CD4-positive, alpha-beta T cell (primary cell): ENCODE measurements at regions of chr14 and their contacts with region 1.

Region 1: GRCh38 chr14:22519877-22520685 is 68.9 kb downstream of the DAD1 start:
- DNase-seq: peak in 2 of 14 experiments; percentile 30 to 61
- ATAC-seq: peak; percentile 19
- H3K4me3 ChIP-seq: peak overlapping the region; percentile 61
- H3K4me3 Mint-ChIP-seq: peak overlapping the region; percentile 86
- H3K27ac ChIP-seq: peak overlapping the region; percentile 85 to 99
- H3K27ac Mint-ChIP-seq: peak overlapping the region; percentile 93
- H3K4me1 ChIP-seq: peaks cover 89% of the 10 kb centered on the region
- H3K4me1 Mint-ChIP-seq: peaks cover 100% of the 10 kb centered on the region
- H3K27me3 ChIP-seq: no peaks in the 10 kb centered on the region
- H3K27me3 Mint-ChIP-seq: no peaks in the 10 kb centered on the region
- CTCF ChIP-seq: no peak

Region 2: GRCh38 chr14:22221508-22221907 is 298.6 kb before region 1 on chr14:
- CTCF ChIA-PET with region 1: interaction called, 3 read pairs
- POLR2A ChIA-PET with region 1: no interaction called
- intact Hi-C with region 1: loop called in 1 of 2 experiments (anchors 10 kb)
- DNase-seq: peak in 3 of 14 experiments; percentile 39 to 51 (median 39)
- ATAC-seq: peak; percentile 41
- H3K4me3 ChIP-seq: no peak overlapping the region
- H3K4me3 Mint-ChIP-seq: peak overlapping the region; percentile 73
- H3K27ac ChIP-seq: no peak overlapping the region
- H3K27ac Mint-ChIP-seq: peak overlapping the region; percentile 67
- H3K4me1 ChIP-seq: no peaks in the 10 kb centered on the region
- H3K4me1 Mint-ChIP-seq: peaks cover 17% of the 10 kb centered on the region
- H3K27me3 ChIP-seq: no peaks in the 10 kb centered on the region
- H3K27me3 Mint-ChIP-seq: no peaks in the 10 kb centered on the region
- CTCF ChIP-seq: peak; percentile 12

Region 3: GRCh38 chr14:22497144-22497423 is 23.0 kb before region 1 on chr14:
- CTCF ChIA-PET with region 1: no interaction called
- POLR2A ChIA-PET with region 1: interaction called, 412 read pairs
- intact Hi-C with region 1: loop called in 1 of 2 experiments (anchors 2 kb)
- DNase-seq: peak in 1 of 14 experiments; percentile 26
- ATAC-seq: peak; percentile 19
- H3K4me3 ChIP-seq: peak overlapping the region; percentile 61
- H3K4me3 Mint-ChIP-seq: peak overlapping the region; percentile 95
- H3K27ac ChIP-seq: peak overlapping the region; percentile 40 to 75
- H3K27ac Mint-ChIP-seq: peak overlapping the region; percentile 93
- H3K4me1 ChIP-seq: peaks cover 23% of the 10 kb centered on the region
- H3K4me1 Mint-ChIP-seq: peaks cover 82% of the 10 kb centered on the region
- H3K27me3 ChIP-seq: no peaks in the 10 kb centered on the region
- H3K27me3 Mint-ChIP-seq: no peaks in the 10 kb centered on the region
- CTCF ChIP-seq: no peak

Region 4: DNA sequence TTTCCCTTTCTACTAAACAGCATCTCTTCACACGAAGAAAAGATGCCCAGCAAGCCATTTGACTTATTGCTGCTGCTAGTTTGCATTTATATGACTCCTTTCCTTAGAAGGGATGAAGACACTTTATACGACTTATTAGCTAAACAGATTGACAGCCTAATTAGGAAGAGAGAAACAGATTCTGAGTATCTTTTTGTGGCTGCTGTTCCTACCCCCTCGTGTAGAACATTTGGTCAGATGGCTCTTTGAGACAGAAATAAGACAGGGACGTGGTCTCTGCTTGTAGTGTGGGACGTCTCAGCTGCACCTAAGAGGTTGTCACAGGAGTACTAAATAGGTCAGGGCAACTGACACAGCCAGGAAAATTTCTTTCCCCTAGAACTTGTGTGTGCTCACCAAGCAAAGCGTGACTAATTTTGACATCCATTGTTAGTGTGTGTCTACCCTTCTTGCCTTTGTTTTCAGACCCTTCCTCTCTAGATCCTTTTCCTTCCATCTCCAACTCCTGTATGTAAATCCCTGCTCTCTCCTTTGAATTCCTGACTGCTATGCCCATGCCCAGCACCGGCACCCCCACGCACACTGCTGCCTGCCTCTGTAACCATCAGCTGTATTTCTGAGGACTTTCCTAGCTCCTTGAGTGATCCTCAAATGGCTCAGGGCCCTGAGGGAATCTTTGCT is 14.2 kb before region 1 on chr14:
- CTCF ChIA-PET with region 1: interaction called, 4 read pairs
- POLR2A ChIA-PET with region 1: interaction called, 412 read pairs
- intact Hi-C with region 1: loop called in 1 of 2 experiments (anchors 2 kb)
- DNase-seq: peak in 5 of 14 experiments; percentile 26 to 65 (median 56)
- ATAC-seq: peak; percentile 36
- H3K4me3 ChIP-seq: peak overlapping the region; percentile 61
- H3K4me3 Mint-ChIP-seq: peak overlapping the region; percentile 77
- H3K27ac ChIP-seq: peak overlapping the region; percentile 77 to 99
- H3K27ac Mint-ChIP-seq: peak overlapping the region; percentile 93
- H3K4me1 ChIP-seq: peaks cover 45% of the 10 kb centered on the region
- H3K4me1 Mint-ChIP-seq: peaks cover 79% of the 10 kb centered on the region
- H3K27me3 ChIP-seq: no peaks in the 10 kb centered on the region
- H3K27me3 Mint-ChIP-seq: no peaks in the 10 kb centered on the region
- CTCF ChIP-seq: no peak

Region 5: DNA sequence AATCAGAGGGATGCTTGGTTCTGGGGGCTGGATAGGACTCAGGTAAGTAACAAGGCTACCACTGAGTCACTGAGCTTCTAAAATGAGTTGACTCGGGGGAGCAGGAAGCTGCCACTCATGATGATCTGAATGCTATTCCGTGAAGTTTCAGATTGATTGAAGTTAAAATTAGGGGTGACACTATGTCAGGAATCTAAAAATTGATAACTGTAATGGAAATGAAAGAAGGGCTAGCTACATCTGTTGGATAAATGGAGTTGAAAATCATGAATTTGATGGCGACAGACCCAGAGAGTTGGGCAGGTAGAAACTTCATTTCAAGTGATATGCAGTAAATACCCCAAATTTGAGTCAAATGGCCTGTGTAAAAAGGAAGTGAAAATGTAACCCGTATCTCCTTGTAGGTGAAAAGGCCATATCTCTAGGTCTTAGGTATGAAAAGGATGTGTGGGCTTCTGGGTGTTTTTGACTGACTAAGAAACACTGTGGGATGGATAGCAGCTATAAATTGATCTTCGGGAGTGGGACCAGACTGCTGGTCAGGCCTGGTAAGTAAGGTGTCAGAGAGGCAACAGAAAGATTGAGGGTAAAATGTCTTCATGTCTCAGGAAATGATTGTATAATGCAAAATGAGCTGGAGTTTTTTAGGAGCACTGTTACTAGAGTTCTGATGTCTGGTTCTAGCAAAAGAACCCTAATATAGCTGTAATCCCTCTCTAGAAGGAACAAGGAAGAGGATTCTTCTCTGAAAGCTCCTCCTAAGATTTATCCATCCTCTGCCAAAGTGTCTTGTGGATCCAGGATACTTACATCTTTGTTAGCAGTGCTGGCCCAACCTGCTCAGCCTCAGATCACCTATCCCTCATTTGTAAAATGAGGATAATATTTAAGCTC is 11.6 kb after region 1 on chr14:
- CTCF ChIA-PET with region 1: interaction called, 9 read pairs
- POLR2A ChIA-PET with region 1: interaction called, 256 read pairs
- intact Hi-C with region 1: loop called (anchors 1 to 2 kb)
- DNase-seq: peak in 3 of 14 experiments; percentile 45 to 73 (median 48)
- ATAC-seq: peak; percentile 51
- H3K4me3 ChIP-seq: peak overlapping the region; percentile 61
- H3K4me3 Mint-ChIP-seq: peak overlapping the region; percentile 86
- H3K27ac ChIP-seq: peak overlapping the region; percentile 52 to 99
- H3K27ac Mint-ChIP-seq: peak overlapping the region; percentile 93
- H3K4me1 ChIP-seq: peaks cover 79% of the 10 kb centered on the region
- H3K4me1 Mint-ChIP-seq: peaks cover 95% of the 10 kb centered on the region
- H3K27me3 ChIP-seq: no peaks in the 10 kb centered on the region
- H3K27me3 Mint-ChIP-seq: no peaks in the 10 kb centered on the region
- CTCF ChIP-seq: no peak

Region 6: GRCh38 chr14:22536853-22537338 is 16.8 kb after region 1 on chr14:
- CTCF ChIA-PET with region 1: interaction called, 8 read pairs
- POLR2A ChIA-PET with region 1: interaction called, 256 read pairs
- intact Hi-C with region 1: loop called (anchors 2 kb)
- DNase-seq: peak in 13 of 14 experiments; percentile 66 to 92 (median 74)
- ATAC-seq: peak; percentile 85
- H3K4me3 ChIP-seq: peak overlapping the region; percentile 61
- H3K4me3 Mint-ChIP-seq: peak overlapping the region; percentile 81
- H3K27ac ChIP-seq: peak overlapping the region; percentile 61 to 99
- H3K27ac Mint-ChIP-seq: peak overlapping the region; percentile 93
- H3K4me1 ChIP-seq: peaks cover 86% of the 10 kb centered on the region
- H3K4me1 Mint-ChIP-seq: peaks cover 99% of the 10 kb centered on the region
- H3K27me3 ChIP-seq: no peaks in the 10 kb centered on the region
- H3K27me3 Mint-ChIP-seq: no peaks in the 10 kb centered on the region
- CTCF ChIP-seq: no peak